Caco-2 (cell line): ENCODE measurements at regions of chrX and their contacts with region 1.

Region 1: GRCh38 chrX:136920001-136920400 is 39.5 kb upstream of the RBMX start:
- DNase-seq: no peak
- H3K4me3 ChIP-seq: no peak overlapping the region
- H3K4me3 Mint-ChIP-seq: no peak overlapping the region
- H3K27ac Mint-ChIP-seq: no peak overlapping the region
- H3K4me1 ChIP-seq: no peaks in the 10 kb centered on the region
- H3K4me1 Mint-ChIP-seq: no peaks in the 10 kb centered on the region
- H3K27me3 ChIP-seq: no peaks in the 10 kb centered on the region
- H3K27me3 Mint-ChIP-seq: no peaks in the 10 kb centered on the region
- CTCF ChIP-seq: no peak

Region 2: DNA sequence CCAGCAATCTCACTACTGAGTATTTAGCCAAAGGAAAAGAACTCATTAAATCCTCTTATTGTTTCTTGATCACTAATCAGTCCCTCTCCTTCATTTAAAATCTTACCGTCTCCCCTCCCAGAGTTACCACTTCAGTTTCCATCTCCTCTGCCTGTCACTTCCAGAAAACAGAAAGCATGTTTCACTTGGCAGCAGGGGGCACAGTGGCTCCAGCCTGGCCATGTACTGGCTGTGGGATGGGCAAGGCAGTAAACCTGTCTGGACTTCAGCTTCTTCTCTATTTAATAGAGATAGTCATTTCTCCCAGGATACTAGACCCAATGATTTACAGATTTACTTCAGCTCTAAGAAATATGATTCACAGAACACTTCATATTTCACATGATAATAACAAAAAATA is 208.9 kb before region 1 on chrX:
- CTCF ChIA-PET with region 1: no interaction called
- POLR2A ChIA-PET with region 1: no interaction called
- intact Hi-C with region 1: loop called (anchors 1 kb)
- DNase-seq: peak; percentile 13 to 29
- H3K4me3 ChIP-seq: no peak overlapping the region
- H3K4me3 Mint-ChIP-seq: no peak overlapping the region
- H3K27ac Mint-ChIP-seq: no peak overlapping the region
- H3K4me1 ChIP-seq: no peaks in the 10 kb centered on the region
- H3K4me1 Mint-ChIP-seq: no peaks in the 10 kb centered on the region
- H3K27me3 ChIP-seq: no peaks in the 10 kb centered on the region
- H3K27me3 Mint-ChIP-seq: no peaks in the 10 kb centered on the region
- CTCF ChIP-seq: peak in 1 of 2 experiments; percentile 31

Region 3: GRCh38 chrX:136767104-136767941 is 152.7 kb before region 1 on chrX:
- CTCF ChIA-PET with region 1: no interaction called
- POLR2A ChIA-PET with region 1: no interaction called
- intact Hi-C with region 1: loop called (anchors 5 kb)
- DNase-seq: peak in 1 of 2 experiments; percentile 21
- H3K4me3 ChIP-seq: peak overlapping the region; percentile 22
- H3K4me3 Mint-ChIP-seq: no peak overlapping the region
- H3K27ac Mint-ChIP-seq: no peak overlapping the region
- H3K4me1 ChIP-seq: no peaks in the 10 kb centered on the region
- H3K4me1 Mint-ChIP-seq: no peaks in the 10 kb centered on the region
- H3K27me3 ChIP-seq: no peaks in the 10 kb centered on the region
- H3K27me3 Mint-ChIP-seq: peaks cover 11% of the 10 kb centered on the region
- CTCF ChIP-seq: peak; percentile 13 to 33

Region 4: GRCh38 chrX:136827026-136827425 is 93.0 kb before region 1 on chrX:
- CTCF ChIA-PET with region 1: no interaction called
- POLR2A ChIA-PET with region 1: no interaction called
- intact Hi-C with region 1: no loop called
- DNase-seq: no peak
- H3K4me3 ChIP-seq: no peak overlapping the region
- H3K4me3 Mint-ChIP-seq: no peak overlapping the region
- H3K27ac Mint-ChIP-seq: no peak overlapping the region
- H3K4me1 ChIP-seq: no peaks in the 10 kb centered on the region
- H3K4me1 Mint-ChIP-seq: no peaks in the 10 kb centered on the region
- H3K27me3 ChIP-seq: no peaks in the 10 kb centered on the region
- H3K27me3 Mint-ChIP-seq: no peaks in the 10 kb centered on the region
- CTCF ChIP-seq: no peak

Region 5: GRCh38 chrX:136866337-136867095 is 53.5 kb before region 1 on chrX:
- CTCF ChIA-PET with region 1: no interaction called
- POLR2A ChIA-PET with region 1: no interaction called
- intact Hi-C with region 1: loop called (anchors 5 kb)
- DNase-seq: peak in 1 of 2 experiments; percentile 34
- H3K4me3 ChIP-seq: no peak overlapping the region
- H3K4me3 Mint-ChIP-seq: no peak overlapping the region
- H3K27ac Mint-ChIP-seq: peak overlapping the region; percentile 29
- H3K4me1 ChIP-seq: no peaks in the 10 kb centered on the region
- H3K4me1 Mint-ChIP-seq: peaks cover 6% of the 10 kb centered on the region
- H3K27me3 ChIP-seq: no peaks in the 10 kb centered on the region
- H3K27me3 Mint-ChIP-seq: no peaks in the 10 kb centered on the region
- CTCF ChIP-seq: no peak

Region 6: DNA sequence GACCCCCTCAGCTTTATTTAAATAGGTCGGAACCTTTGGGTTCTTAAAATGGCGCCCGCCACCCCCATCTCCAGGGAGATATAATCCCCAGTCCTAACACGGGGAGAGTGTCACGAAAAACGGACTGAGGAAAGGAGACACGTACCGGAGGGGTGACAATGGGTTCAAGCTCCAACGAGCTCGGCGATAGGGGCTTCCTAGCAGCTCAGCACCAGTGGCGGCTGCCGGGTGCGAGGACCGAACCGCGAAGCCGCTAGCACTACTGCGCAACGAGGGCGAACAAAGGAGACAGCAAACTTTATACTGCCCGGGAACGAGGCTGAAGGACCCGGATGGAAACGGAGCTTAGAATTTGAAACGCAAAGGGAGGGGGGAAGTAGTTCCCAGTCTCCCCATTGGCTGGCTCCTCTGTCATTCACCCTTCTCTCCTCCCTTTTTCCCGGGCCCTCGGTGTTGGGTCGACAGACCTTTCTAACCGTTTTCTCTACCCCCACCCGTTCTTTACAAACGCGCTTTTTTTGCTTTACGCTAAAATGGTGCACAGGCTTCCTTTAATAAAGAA is 39.5 kb before region 1 on chrX and contains the start of gene RBMX:
- CTCF ChIA-PET with region 1: no interaction called
- POLR2A ChIA-PET with region 1: interaction called, 6 read pairs
- intact Hi-C with region 1: loop called (anchors 1 kb)
- DNase-seq: peak; percentile 89 to 91
- H3K4me3 ChIP-seq: peak within 1 kb of the TSS; percentile 79
- H3K4me3 Mint-ChIP-seq: peak within 1 kb of the TSS; percentile 84
- H3K27ac Mint-ChIP-seq: peak within 1 kb of the TSS; percentile 98
- H3K4me1 ChIP-seq: no peaks in the 10 kb centered on the region
- H3K4me1 Mint-ChIP-seq: peaks cover 4% of the 10 kb centered on the region
- H3K27me3 ChIP-seq: no peaks in the 10 kb centered on the region
- H3K27me3 Mint-ChIP-seq: no peaks in the 10 kb centered on the region
- CTCF ChIP-seq: no peak
- total RNA-seq, gene RBMX: 253 and 261 TPM in 2 replicates

Region 7: GRCh38 chrX:136909706-136910564 is 10.1 kb before region 1 on chrX:
- CTCF ChIA-PET with region 1: no interaction called
- POLR2A ChIA-PET with region 1: no interaction called
- intact Hi-C with region 1: loop called (anchors 1 kb)
- DNase-seq: peak; percentile 82 to 92
- H3K4me3 ChIP-seq: peak overlapping the region; percentile 65
- H3K4me3 Mint-ChIP-seq: peak overlapping the region; percentile 95
- H3K27ac Mint-ChIP-seq: peak overlapping the region; percentile 88
- H3K4me1 ChIP-seq: no peaks in the 10 kb centered on the region
- H3K4me1 Mint-ChIP-seq: no peaks in the 10 kb centered on the region
- H3K27me3 ChIP-seq: no peaks in the 10 kb centered on the region
- H3K27me3 Mint-ChIP-seq: no peaks in the 10 kb centered on the region
- CTCF ChIP-seq: no peak

Region 8: DNA sequence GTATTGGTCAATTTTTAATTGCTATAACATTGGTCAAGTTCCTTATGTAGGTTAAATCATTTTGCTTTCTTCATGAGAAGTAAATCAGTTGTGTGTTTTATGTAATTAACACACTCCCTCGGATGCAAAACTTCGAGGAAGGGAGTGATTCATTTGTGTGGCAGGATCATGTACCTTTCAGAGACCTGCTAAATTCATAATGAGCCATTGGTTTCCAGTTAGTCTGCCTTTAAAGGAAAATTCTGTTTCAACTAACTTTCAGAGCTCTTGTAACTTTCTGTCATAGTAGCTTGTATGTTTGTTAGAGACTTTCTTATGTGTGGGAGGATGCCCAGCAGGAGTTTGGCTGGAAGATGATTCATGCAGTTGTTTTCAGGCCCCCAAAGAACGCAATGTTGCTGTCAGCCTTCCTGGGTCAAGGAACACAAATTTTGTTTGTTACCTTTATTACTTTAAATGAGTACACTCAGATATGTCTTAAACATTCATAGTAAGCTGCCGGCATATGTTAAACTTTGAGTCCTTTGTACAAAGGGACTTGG is 41.7 kb after region 1 on chrX:
- CTCF ChIA-PET with region 1: no interaction called
- POLR2A ChIA-PET with region 1: no interaction called
- intact Hi-C with region 1: no loop called
- DNase-seq: no peak
- H3K4me3 ChIP-seq: no peak overlapping the region
- H3K4me3 Mint-ChIP-seq: no peak overlapping the region
- H3K27ac Mint-ChIP-seq: no peak overlapping the region
- H3K4me1 ChIP-seq: no peaks in the 10 kb centered on the region
- H3K4me1 Mint-ChIP-seq: no peaks in the 10 kb centered on the region
- H3K27me3 ChIP-seq: no peaks in the 10 kb centered on the region
- H3K27me3 Mint-ChIP-seq: no peaks in the 10 kb centered on the region
- CTCF ChIP-seq: no peak

Region 9: DNA sequence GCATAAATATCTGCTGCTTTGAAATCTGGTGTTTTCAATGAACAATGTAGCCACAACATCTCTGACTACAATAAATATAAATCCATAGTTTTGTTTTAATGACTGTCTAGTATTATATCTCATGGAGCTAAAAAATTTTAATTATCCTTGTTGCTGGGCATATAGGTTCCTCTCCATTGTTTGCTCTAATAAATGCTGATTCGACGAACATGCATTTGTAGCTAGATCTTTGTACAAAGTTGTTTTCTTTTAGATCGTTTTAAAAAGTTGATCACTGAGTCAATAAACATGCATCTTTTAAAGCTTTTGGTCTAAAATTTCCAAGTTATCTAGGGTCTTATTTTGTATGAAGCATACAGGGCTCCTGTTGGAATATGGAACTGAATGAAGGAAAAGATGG is 244.3 kb after region 1 on chrX:
- CTCF ChIA-PET with region 1: no interaction called
- POLR2A ChIA-PET with region 1: no interaction called
- intact Hi-C with region 1: no loop called
- DNase-seq: no peak
- H3K4me3 ChIP-seq: no peak overlapping the region
- H3K4me3 Mint-ChIP-seq: no peak overlapping the region
- H3K27ac Mint-ChIP-seq: no peak overlapping the region
- H3K4me1 ChIP-seq: no peaks in the 10 kb centered on the region
- H3K4me1 Mint-ChIP-seq: no peaks in the 10 kb centered on the region
- H3K27me3 ChIP-seq: no peaks in the 10 kb centered on the region
- H3K27me3 Mint-ChIP-seq: no peaks in the 10 kb centered on the region
- CTCF ChIP-seq: no peak